B cell (primary cell): ENCODE measurements at regions of chr17 and their contacts with region 1.

Region 1: DNA sequence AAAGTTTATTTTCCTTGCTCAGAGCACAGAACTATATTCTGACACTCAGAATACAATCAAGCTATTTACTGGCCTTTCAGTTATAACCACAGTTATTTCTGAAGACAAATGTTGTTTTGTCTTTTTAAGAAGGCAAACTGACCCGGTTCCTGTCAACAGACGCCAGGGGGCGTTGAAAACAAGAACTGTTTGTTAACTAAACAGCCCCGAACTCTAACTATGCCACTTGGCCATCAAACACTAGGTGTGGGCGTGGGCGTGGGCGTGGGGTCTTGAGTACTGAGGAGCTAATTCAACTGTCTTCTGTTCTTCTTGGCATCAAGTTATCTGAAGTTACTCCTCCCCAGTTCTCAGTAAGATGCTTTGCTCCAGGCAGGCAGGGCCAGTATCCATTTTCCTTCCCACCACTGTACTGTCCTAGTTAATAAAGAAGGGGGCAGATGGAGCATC is 63.2 kb upstream of the MTMR4 start:
- DNase-seq: peak; percentile 66
- ATAC-seq: no peak
- H3K4me3 ChIP-seq: no peak overlapping the region
- H3K4me3 Mint-ChIP-seq: no peak overlapping the region
- H3K27ac ChIP-seq: no peak overlapping the region
- H3K27ac Mint-ChIP-seq: no peak overlapping the region
- H3K4me1 ChIP-seq: no peaks in the 10 kb centered on the region
- H3K4me1 Mint-ChIP-seq: no peaks in the 10 kb centered on the region
- H3K27me3 ChIP-seq: no peaks in the 10 kb centered on the region
- H3K27me3 Mint-ChIP-seq: no peaks in the 10 kb centered on the region
- CTCF ChIP-seq: peak; percentile 75

Region 2: DNA sequence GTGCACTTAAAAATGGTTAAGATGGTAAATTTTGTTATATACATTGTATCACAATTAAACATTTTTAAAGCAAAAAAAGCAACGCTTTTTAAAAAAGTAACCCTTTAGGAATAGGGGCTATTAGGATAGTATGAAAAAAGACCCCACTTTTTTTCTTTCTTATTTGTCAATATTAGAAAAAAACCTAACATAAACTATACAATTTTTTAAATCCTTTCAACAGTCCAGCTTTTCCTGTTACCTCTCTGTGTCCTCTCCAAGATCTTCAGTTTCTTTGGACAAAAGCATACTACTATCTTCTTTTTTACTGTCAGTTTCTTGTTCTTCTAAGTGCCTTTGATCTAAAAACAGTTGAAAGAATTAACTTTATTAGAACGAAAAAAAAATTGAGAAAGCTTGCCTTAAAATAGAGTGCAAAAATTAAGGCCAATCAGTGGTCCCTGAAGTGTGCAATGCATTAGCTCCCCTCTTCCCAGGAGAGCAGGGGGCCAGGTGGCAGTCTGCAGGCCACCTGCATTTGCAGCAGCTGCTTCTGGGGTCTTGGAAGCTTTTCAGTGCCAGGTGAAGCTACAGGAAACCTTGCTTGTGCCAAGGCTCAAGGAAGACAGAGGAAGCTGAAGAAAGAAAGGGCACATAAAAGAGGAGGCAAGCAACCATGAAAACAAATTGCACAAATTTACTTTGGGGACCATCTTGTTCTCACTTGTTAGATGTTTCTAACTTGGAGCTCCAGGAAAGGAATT is 12.9 kb before region 1 on chr17:
- CTCF ChIA-PET with region 1: interaction called, 10 read pairs
- POLR2A ChIA-PET with region 1: no interaction called
- intact Hi-C with region 1: no loop called
- DNase-seq: no peak
- ATAC-seq: no peak
- H3K4me3 ChIP-seq: no peak overlapping the region
- H3K4me3 Mint-ChIP-seq: no peak overlapping the region
- H3K27ac ChIP-seq: no peak overlapping the region
- H3K27ac Mint-ChIP-seq: no peak overlapping the region
- H3K4me1 ChIP-seq: no peaks in the 10 kb centered on the region
- H3K4me1 Mint-ChIP-seq: no peaks in the 10 kb centered on the region
- H3K27me3 ChIP-seq: no peaks in the 10 kb centered on the region
- H3K27me3 Mint-ChIP-seq: no peaks in the 10 kb centered on the region
- CTCF ChIP-seq: no peak